ENCODE measurements at regions of chr16 and their contacts with region 1.

Region 1: DNA sequence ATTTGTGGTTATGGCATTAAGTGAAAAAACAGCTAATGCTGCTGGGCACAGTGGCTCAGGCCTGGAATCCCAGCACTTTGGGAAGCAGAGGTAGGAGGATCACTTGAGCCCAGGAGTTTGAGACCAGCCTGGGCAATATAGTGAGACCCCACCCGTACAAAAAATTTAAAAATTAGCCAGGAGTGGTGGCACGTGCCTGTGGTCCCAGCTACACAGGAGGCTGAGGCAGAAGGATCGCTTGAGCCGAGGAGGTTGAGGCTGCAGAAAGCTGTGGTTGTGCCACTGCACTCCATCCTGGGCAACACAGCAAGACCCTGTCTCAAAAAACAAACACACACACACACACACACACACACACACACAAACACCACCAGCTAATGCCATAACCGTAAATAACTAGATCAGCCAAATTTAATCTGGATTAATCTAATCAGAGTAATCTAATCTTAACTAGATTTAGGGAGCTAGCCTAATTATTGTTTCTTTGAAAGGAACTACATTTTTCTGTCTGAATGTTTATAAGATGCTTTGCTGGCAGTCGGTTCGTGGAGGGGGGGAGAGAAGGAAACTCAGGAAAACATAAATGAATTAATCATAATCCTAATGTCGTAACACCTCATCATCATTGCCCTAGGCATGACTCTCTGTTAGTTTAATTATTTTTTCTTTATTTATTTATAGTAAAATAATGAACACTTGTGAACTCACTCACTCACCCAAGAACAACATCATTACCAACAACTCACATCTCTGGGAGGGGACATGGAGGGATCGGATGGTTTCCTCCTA is 12.5 kb upstream of the RBBP6 start:
- DNase-seq: no peak
- ATAC-seq: no peak
- H3K4me3 ChIP-seq: no peak overlapping the region
- H3K27ac ChIP-seq: no peak overlapping the region
- H3K4me1 ChIP-seq: peaks cover 3% of the 10 kb centered on the region; the same call in 1 of the 2 replicates
- H3K27me3 ChIP-seq: no peaks in the 10 kb centered on the region
- CTCF ChIP-seq: no peak

Region 2: GRCh38 chr16:23765933-23766332 is 760.9 kb before region 1 on chr16:
- CTCF ChIA-PET with region 1: no interaction called
- POLR2A ChIA-PET with region 1: interaction called, 10 read pairs
- in situ Hi-C with region 1: no loop called
- intact Hi-C with region 1: no loop called
- DNase-seq: no peak
- ATAC-seq: no peak
- H3K4me3 ChIP-seq: no peak overlapping the region
- H3K27ac ChIP-seq: no peak overlapping the region
- H3K4me1 ChIP-seq: no peaks in the 10 kb centered on the region
- H3K27me3 ChIP-seq: no peaks in the 10 kb centered on the region
- CTCF ChIP-seq: no peak

Region 3: GRCh38 chr16:24463196-24463945 is 63.5 kb before region 1 on chr16:
- CTCF ChIA-PET with region 1: no interaction called
- POLR2A ChIA-PET with region 1: no interaction called
- in situ Hi-C with region 1: no loop called
- intact Hi-C with region 1: no loop called
- DNase-seq: no peak
- ATAC-seq: no peak
- H3K4me3 ChIP-seq: no peak overlapping the region
- H3K27ac ChIP-seq: no peak overlapping the region
- H3K4me1 ChIP-seq: no peaks in the 10 kb centered on the region
- H3K27me3 ChIP-seq: no peaks in the 10 kb centered on the region
- CTCF ChIP-seq: no peak